ENCODE measurements at regions of chr6 and their contacts with region 1.

Region 1: GRCh38 chr6:90179190-90180169 is 117.2 kb downstream of the BACH2 start:
- DNase-seq: peak in 1 of 4 experiments; percentile 30
- ATAC-seq: no peak
- H3K4me3 ChIP-seq: no peak overlapping the region
- H3K27ac ChIP-seq: no peak overlapping the region
- H3K4me1 ChIP-seq: peaks cover 0 to 9% of the 10 kb centered on the region in 2 experiments; a peak in 2 of 5 replicates
- H3K27me3 ChIP-seq: 0 out of 5 replicates have a peak, but pooled peaks cover 0 to 4% of the 10 kb centered on the region in 2 experiments
- CTCF ChIP-seq: peak; percentile 38 to 41 (median 41); a peak in 3 of 6 replicates
- EP300 ChIP-seq: no peak
- POLR2A ChIP-seq: no peak
- RAD21 ChIP-seq: peak; percentile 48 to 60

Region 2: DNA sequence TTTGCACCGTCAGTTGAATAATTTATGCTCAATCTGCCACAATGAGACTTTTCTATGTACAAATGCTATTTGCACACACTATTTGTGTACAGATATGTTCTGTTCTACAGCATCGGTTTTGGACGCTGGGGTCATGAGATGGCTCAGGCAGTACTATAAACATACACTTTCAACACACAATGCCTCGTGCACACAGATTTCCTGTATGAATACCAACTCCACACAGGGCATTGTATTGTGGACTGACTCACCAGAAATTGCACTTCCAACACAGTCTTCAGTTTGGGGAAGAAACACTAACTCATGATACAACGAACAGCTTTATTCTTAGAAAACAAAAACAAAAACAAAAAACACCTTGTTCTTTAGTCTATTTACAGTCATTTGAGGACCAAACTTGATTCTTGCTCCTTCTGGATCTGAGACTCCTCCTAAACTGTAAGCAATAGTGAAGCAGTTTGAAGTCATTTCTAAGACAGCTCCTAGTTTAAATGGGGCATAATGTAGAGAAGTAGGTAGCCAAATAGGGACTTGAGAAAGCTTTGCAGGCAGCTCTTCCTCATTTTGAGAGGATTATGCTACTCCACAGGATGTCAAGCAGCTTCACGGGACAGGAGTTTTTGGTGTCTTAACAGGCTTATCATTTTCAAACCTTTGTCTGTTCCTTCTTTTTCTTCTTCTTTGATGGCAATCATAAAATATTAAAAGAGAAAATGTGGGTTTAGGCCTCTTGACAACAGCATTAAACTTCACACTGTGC is 251.5 kb before region 1 on chr6:
- CTCF ChIA-PET with region 1: no interaction called
- POLR2A ChIA-PET with region 1: no interaction called
- in situ Hi-C with region 1: no loop called
- intact Hi-C with region 1: no loop called
- DNase-seq: no peak
- ATAC-seq: no peak
- H3K4me3 ChIP-seq: no peak overlapping the region
- H3K27ac ChIP-seq: no peak overlapping the region
- H3K4me1 ChIP-seq: peaks cover 8 to 14% of the 10 kb centered on the region in 2 experiments; a peak in 3 of 5 replicates
- H3K27me3 ChIP-seq: peaks cover 23 to 25% of the 10 kb centered on the region in 2 experiments
- CTCF ChIP-seq: no peak
- EP300 ChIP-seq: no peak
- POLR2A ChIP-seq: no peak
- RAD21 ChIP-seq: no peak

Region 3: DNA sequence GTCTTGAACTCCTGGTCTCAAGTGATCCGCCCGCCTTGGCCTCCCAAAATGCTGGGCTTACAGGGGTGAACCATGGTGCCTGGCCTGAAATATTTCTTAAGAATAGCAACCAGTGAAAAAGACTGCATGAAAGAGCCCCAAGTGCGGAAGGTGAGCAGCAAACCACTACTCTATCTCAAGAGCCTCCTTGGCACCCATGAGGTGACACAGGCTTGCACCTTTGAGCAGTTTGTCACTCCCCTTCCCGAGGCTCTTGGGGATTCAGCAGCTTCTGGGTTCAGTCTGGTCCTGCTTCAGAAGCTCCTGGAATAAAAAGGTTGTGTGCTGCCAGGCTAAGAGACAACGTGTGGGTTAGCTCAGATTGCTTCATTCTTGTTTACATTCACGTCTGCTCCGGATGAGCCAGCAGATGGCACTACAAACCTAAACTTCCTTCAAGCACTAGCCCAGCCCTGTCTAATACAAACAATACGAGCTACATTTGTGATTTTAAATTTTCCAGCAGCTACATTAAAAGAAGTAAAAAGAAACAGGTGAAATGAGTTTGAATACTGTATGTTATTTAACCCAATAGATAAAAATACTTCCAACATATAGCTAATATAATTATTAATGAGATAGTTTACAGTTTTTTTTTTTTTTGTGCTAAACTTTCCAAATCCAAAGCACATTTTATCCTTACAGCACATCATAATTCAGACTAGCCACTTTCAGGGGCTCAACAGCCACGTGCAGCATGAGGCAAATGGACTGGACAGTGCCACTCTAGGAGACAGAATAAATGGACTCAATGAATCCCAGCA is 239.1 kb before region 1 on chr6:
- CTCF ChIA-PET with region 1: interaction called, 3 read pairs
- POLR2A ChIA-PET with region 1: no interaction called
- in situ Hi-C with region 1: no loop called
- intact Hi-C with region 1: loop called (anchors 10 kb)
- DNase-seq: peak; percentile 54 to 79 (median 64)
- ATAC-seq: peak; percentile 99
- H3K4me3 ChIP-seq: no peak overlapping the region
- H3K27ac ChIP-seq: no peak overlapping the region
- H3K4me1 ChIP-seq: no peaks in the 10 kb centered on the region
- H3K27me3 ChIP-seq: peaks cover 0 to 13% of the 10 kb centered on the region in 2 experiments; a peak in 1 of 5 replicates
- CTCF ChIP-seq: peak; percentile 77 to 86 (median 82)
- EP300 ChIP-seq: 0 out of 2 replicates have a peak, but pooled peaks have one; percentile 16
- POLR2A ChIP-seq: no peak
- RAD21 ChIP-seq: peak; percentile 90 to 96

Region 4: GRCh38 chr6:89970609-89971337 is 208.7 kb before region 1 on chr6:
- CTCF ChIA-PET with region 1: interaction called, 3 read pairs
- POLR2A ChIA-PET with region 1: no interaction called
- in situ Hi-C with region 1: no loop called
- intact Hi-C with region 1: loop called (anchors 1 kb)
- DNase-seq: peak; percentile 51 to 69 (median 53)
- ATAC-seq: peak; percentile 93
- H3K4me3 ChIP-seq: no peak overlapping the region
- H3K27ac ChIP-seq: no peak overlapping the region
- H3K4me1 ChIP-seq: peaks cover 3% of the 10 kb centered on the region in 2 experiments; a peak in 1 of 5 replicates
- H3K27me3 ChIP-seq: peaks cover 0 to 11% of the 10 kb centered on the region in 2 experiments; a peak in 1 of 5 replicates
- CTCF ChIP-seq: peak; percentile 62 to 76 (median 62); a peak in 5 of 6 replicates
- EP300 ChIP-seq: no peak
- POLR2A ChIP-seq: no peak
- RAD21 ChIP-seq: peak; percentile 83 to 89

Region 5: GRCh38 chr6:90118581-90118980 is 60.9 kb before region 1 on chr6:
- CTCF ChIA-PET with region 1: no interaction called
- POLR2A ChIA-PET with region 1: no interaction called
- in situ Hi-C with region 1: no loop called
- intact Hi-C with region 1: loop called (anchors 5 kb)
- DNase-seq: no peak
- ATAC-seq: no peak
- H3K4me3 ChIP-seq: no peak overlapping the region
- H3K27ac ChIP-seq: no peak overlapping the region
- H3K4me1 ChIP-seq: no peaks in the 10 kb centered on the region
- H3K27me3 ChIP-seq: no peaks in the 10 kb centered on the region
- CTCF ChIP-seq: peak in 1 of 3 experiments; percentile 23; a peak in 2 of 6 replicates
- EP300 ChIP-seq: no peak
- POLR2A ChIP-seq: no peak
- RAD21 ChIP-seq: peak; percentile 24 to 40; a peak in 1 of 4 replicates